ENCODE measurements at regions of chr6 and their contacts with region 1.

Region 1: DNA sequence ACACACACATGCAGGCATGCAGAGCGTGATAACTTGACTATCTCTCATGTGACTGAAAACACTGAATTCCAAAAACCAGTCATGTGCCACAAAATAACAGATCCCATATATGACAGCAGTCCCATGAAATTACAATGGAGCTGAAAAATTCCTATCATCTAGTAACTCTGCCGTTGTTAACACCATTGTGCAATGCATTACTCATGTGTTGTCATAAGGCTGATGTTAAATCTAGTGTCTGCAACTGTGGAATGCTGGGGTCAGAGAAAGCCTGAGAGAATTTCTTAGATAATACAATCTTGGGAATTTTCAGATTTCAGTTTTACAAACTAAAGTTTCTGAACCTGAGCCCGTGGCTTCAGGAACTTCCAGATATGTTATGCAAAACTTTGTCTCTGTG is 70.2 kb downstream of the LYRM4 start:
- DNase-seq: peak; percentile 98
- ATAC-seq: peak; percentile 95
- H3K4me3 ChIP-seq: no peak overlapping the region
- H3K27ac ChIP-seq: no peak overlapping the region
- H3K4me1 ChIP-seq: peaks cover 9% of the 10 kb centered on the region
- H3K27me3 ChIP-seq: no peaks in the 10 kb centered on the region
- CTCF ChIP-seq: no peak
- POLR2A ChIP-seq: no peak
- RAD21 ChIP-seq: no peak

Region 2: GRCh38 chr6:5205877-5206850 is 15.7 kb after region 1 on chr6:
- CTCF ChIA-PET with region 1: interaction called, 9 read pairs
- POLR2A ChIA-PET with region 1: no interaction called
- dilution Hi-C with region 1: no loop called
- in situ Hi-C with region 1: no loop called
- intact Hi-C with region 1: loop called (anchors 2 kb)
- DNase-seq: peak; percentile 64
- ATAC-seq: peak; percentile 52
- H3K4me3 ChIP-seq: no peak overlapping the region
- H3K27ac ChIP-seq: no peak overlapping the region
- H3K4me1 ChIP-seq: peaks cover 10% of the 10 kb centered on the region
- H3K27me3 ChIP-seq: no peaks in the 10 kb centered on the region
- CTCF ChIP-seq: no peak
- POLR2A ChIP-seq: no peak
- RAD21 ChIP-seq: no peak

Measured in IMR-90 (cell line).